Naive thymus-derived CD4-positive, alpha-beta T cell (primary cell): ENCODE measurements at regions of chr12 and their contacts with region 1.

Region 1: GRCh38 chr12:92034858-92035401 is 110.7 kb downstream of the BTG1 start:
- DNase-seq: peak; percentile 26 to 79 (median 71)
- ATAC-seq: peak; percentile 54
- H3K4me3 ChIP-seq: peak overlapping the region; percentile 52
- H3K4me3 Mint-ChIP-seq: peak overlapping the region; percentile 84 to 99 (median 91)
- H3K27ac ChIP-seq: peak overlapping the region; percentile 76
- H3K27ac Mint-ChIP-seq: peak overlapping the region; percentile 95 to 100 (median 99)
- H3K4me1 ChIP-seq: peaks cover 71 to 81% of the 10 kb centered on the region in 2 donors
- H3K4me1 Mint-ChIP-seq: peaks cover 49 to 100% (median 94%) of the 10 kb centered on the region in 7 donors
- H3K27me3 ChIP-seq: no peaks in the 10 kb centered on the region
- H3K27me3 Mint-ChIP-seq: no peaks in the 10 kb centered on the region

Region 2: DNA sequence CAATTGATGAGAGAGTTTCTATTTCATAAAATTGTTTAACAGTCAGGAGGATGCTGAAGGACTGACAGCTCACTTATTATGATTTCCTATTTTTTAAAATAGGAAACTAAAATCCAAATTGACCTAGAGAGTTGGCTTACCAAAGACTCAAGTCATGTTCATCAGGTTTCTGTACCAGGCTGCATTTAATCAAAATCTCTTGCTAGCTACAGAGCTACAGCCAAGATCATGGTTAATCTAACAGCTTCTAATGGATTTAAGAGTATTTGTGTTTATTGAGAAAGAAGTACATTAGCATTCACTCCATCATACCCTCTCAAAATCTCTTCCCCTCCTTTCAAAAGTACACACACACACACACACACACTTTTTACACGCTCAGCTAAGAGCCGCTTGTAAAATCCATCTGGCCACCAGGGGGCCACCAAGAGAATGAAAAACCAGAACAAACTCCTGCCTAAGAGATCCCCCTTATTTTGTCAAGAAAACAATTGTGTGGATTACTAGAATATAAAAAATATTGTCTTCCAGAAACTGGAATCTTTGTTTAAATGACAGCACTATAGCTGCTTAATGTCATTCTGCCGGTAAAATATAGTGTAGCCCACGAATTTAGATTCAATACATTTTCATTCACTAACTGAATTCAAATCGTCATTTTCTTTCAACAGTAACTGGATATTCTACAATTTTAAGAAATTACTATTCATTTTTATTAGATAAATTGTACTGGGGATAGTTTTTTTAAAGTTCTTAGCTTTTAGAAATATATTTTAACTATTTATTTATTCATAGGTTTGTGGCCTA is 223.2 kb before region 1 on chr12:
- CTCF ChIA-PET with region 1: interaction called, 6 read pairs
- POLR2A ChIA-PET with region 1: interaction called, 3 read pairs
- intact Hi-C with region 1: loop called in 1 of 2 experiments (anchors 1 kb)
- DNase-seq: peak; percentile 64 to 79 (median 70)
- ATAC-seq: peak; percentile 90
- H3K4me3 ChIP-seq: peak overlapping the region; percentile 37
- H3K4me3 Mint-ChIP-seq: peak overlapping the region in 9 of 10 donors; percentile 31 to 80 (median 52)
- H3K27ac ChIP-seq: peak overlapping the region; percentile 22
- H3K27ac Mint-ChIP-seq: peak overlapping the region in 8 of 9 donors; percentile 81 to 97 (median 86)
- H3K4me1 ChIP-seq: peaks cover 0 to 15% of the 10 kb centered on the region in 2 donors
- H3K4me1 Mint-ChIP-seq: peaks cover 10 to 48% (median 35%) of the 10 kb centered on the region in 7 donors
- H3K27me3 ChIP-seq: no peaks in the 10 kb centered on the region
- H3K27me3 Mint-ChIP-seq: no peaks in the 10 kb centered on the region

Region 3: GRCh38 chr12:92002673-92003382 is 32.1 kb before region 1 on chr12:
- CTCF ChIA-PET with region 1: interaction called, 3 read pairs
- POLR2A ChIA-PET with region 1: interaction called, 38 read pairs
- intact Hi-C with region 1: loop called in 1 of 2 experiments (anchors 1 kb)
- DNase-seq: peak in 2 of 9 donors; percentile 12 to 17
- ATAC-seq: peak; percentile 52
- H3K4me3 ChIP-seq: no peak overlapping the region
- H3K4me3 Mint-ChIP-seq: peak overlapping the region in 9 of 10 donors; percentile 50 to 83 (median 69)
- H3K27ac ChIP-seq: peak overlapping the region; percentile 60
- H3K27ac Mint-ChIP-seq: peak overlapping the region; percentile 6 to 98 (median 91)
- H3K4me1 ChIP-seq: peaks cover 0 to 23% of the 10 kb centered on the region in 2 donors
- H3K4me1 Mint-ChIP-seq: peaks cover 14 to 81% (median 66%) of the 10 kb centered on the region in 7 donors
- H3K27me3 ChIP-seq: no peaks in the 10 kb centered on the region
- H3K27me3 Mint-ChIP-seq: no peaks in the 10 kb centered on the region

Region 4: GRCh38 chr12:92049403-92049802 is 14.5 kb after region 1 on chr12:
- CTCF ChIA-PET with region 1: interaction called, 3 read pairs
- POLR2A ChIA-PET with region 1: interaction called, 128 read pairs
- intact Hi-C with region 1: loop called in 1 of 2 experiments (anchors 1 kb)
- DNase-seq: no peak
- ATAC-seq: no peak
- H3K4me3 ChIP-seq: no peak overlapping the region
- H3K4me3 Mint-ChIP-seq: peak overlapping the region in 1 of 10 donors; percentile 34
- H3K27ac ChIP-seq: no peak overlapping the region
- H3K27ac Mint-ChIP-seq: peak overlapping the region in 4 of 9 donors; percentile 14 to 99 (median 74)
- H3K4me1 ChIP-seq: peaks cover 0 to 34% of the 10 kb centered on the region in 2 donors
- H3K4me1 Mint-ChIP-seq: peaks cover 26 to 89% (median 80%) of the 10 kb centered on the region in 7 donors
- H3K27me3 ChIP-seq: no peaks in the 10 kb centered on the region
- H3K27me3 Mint-ChIP-seq: no peaks in the 10 kb centered on the region

Region 5: DNA sequence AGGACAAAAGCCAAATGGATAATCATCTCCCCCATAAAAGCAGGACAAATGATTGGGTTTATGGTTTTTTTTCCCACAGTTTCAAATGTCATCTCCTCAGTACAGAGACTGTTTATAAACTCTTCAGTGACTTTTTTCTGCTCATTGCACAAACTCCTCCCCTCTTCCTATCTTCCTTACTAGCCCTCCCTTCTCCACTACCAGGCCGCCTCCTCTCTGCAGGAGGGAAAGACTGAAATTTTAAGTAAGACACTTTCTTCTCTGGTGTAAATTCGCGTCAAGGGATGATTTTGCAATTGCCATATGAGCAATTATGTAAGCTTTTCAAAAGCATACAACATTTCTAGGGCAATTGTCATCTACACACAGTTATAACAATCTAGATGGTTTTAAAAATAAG is 73.7 kb after region 1 on chr12:
- CTCF ChIA-PET with region 1: interaction called, 3 read pairs
- POLR2A ChIA-PET with region 1: interaction called, 23 read pairs
- intact Hi-C with region 1: loop called in 1 of 2 experiments (anchors 1 kb)
- DNase-seq: no peak
- ATAC-seq: peak; percentile 24
- H3K4me3 ChIP-seq: peak overlapping the region; percentile 14
- H3K4me3 Mint-ChIP-seq: peak overlapping the region in 9 of 10 donors; percentile 20 to 91 (median 68)
- H3K27ac ChIP-seq: peak overlapping the region; percentile 51
- H3K27ac Mint-ChIP-seq: peak overlapping the region in 8 of 9 donors; percentile 73 to 92 (median 84)
- H3K4me1 ChIP-seq: peaks cover 10 to 73% of the 10 kb centered on the region in 2 donors
- H3K4me1 Mint-ChIP-seq: peaks cover 55 to 93% (median 83%) of the 10 kb centered on the region in 7 donors
- H3K27me3 ChIP-seq: no peaks in the 10 kb centered on the region
- H3K27me3 Mint-ChIP-seq: no peaks in the 10 kb centered on the region

Region 6: DNA sequence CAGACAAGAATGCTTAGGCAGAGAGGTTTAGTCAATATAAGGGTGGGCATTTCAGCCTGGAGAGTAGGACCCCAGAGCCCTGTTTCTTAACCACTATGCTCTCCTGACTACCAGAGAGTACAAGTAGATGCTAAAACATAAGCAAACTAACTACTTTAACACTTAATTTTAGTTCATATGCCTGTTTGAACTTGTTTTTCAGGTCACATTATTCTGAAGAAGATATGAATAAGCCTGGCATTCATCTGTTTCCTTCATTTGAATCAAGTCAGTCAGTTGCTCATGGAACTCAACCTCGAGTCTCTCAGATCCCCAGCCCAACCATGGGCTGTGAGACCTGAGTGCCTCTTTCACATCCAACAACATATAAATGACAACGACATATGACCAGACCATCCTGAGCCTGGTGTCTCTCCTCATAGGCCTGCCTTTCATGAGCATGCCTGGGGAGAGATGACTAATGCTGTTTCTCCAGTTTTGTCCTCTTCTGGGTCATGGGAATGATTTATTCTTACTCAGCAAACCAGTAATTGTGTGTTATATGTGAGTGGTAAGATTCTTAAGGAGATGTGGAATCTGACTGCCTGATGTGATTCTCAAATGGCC is 361.8 kb after region 1 on chr12:
- CTCF ChIA-PET with region 1: interaction called, 3 read pairs
- POLR2A ChIA-PET with region 1: interaction called, 3 read pairs
- intact Hi-C with region 1: loop called in 1 of 2 experiments (anchors 2 kb)
- DNase-seq: no peak
- ATAC-seq: no peak
- H3K4me3 ChIP-seq: no peak overlapping the region
- H3K4me3 Mint-ChIP-seq: peak overlapping the region in 8 of 10 donors; percentile 9 to 76 (median 62)
- H3K27ac ChIP-seq: peak overlapping the region; percentile 85
- H3K27ac Mint-ChIP-seq: peak overlapping the region; percentile 90 to 100 (median 98)
- H3K4me1 ChIP-seq: peaks cover 76 to 84% of the 10 kb centered on the region in 2 donors
- H3K4me1 Mint-ChIP-seq: peaks cover 56 to 100% (median 93%) of the 10 kb centered on the region in 7 donors
- H3K27me3 ChIP-seq: no peaks in the 10 kb centered on the region
- H3K27me3 Mint-ChIP-seq: no peaks in the 10 kb centered on the region